ENCODE measurements at regions of chr11 and their contacts with region 1.

Region 1: GRCh38 chr11:107810875-107811274 is 47.7 kb downstream of the SLC35F2 start:
- DNase-seq: no peak
- H3K27ac ChIP-seq: no peak overlapping the region
- CTCF ChIP-seq: no peak

Region 2: GRCh38 chr11:107243929-107244328 is 566.9 kb before region 1 on chr11:
- CTCF ChIA-PET with region 1: no interaction called
- POLR2A ChIA-PET with region 1: no interaction called
- DNase-seq: no peak
- H3K27ac ChIP-seq: no peak overlapping the region
- CTCF ChIP-seq: no peak

Region 3: DNA sequence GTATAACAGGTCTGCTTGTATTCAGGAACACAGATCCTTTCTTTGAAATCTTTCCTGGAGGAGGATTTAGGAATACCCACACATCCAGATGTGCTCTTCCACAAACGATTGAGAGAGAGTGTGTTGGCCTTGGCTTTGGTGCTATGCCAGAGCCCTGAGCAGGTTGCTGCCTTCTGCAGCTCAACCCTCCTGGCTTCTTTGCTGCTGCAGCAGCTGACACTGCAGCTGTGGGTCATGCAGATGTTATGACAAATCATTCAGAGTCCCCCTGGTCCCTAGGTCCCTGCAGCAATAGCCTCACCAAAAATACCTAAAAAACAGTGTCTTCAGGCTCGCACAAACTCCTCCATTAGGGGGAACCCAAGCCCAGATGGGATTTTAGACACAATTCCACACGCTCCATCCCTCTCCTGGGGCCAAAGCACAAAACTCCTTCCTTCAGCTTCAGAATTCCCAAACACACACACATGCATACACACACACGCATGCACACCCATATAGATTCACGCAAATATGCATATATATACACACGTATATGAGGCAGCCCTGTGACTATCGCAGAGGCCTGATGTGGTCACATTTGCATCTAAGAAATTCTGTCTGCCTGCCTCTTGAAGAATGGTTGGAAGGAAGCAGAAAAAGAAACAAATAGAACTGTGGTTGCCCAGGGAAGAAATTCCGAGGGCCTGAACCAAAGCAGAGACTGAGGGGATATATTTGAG is 134.4 kb before region 1 on chr11:
- CTCF ChIA-PET with region 1: no interaction called
- POLR2A ChIA-PET with region 1: no interaction called
- DNase-seq: no peak
- H3K27ac ChIP-seq: no peak overlapping the region
- CTCF ChIP-seq: no peak

Region 4: GRCh38 chr11:107824668-107825369 is 13.9 kb after region 1 on chr11:
- CTCF ChIA-PET with region 1: interaction called, 3 read pairs
- POLR2A ChIA-PET with region 1: interaction called, 10 read pairs
- DNase-seq: no peak
- H3K27ac ChIP-seq: peak overlapping the region; percentile 9; the same call in 1 of the 2 replicates
- CTCF ChIP-seq: no peak

Region 5: GRCh38 chr11:107882095-107882820 is 71.4 kb after region 1 on chr11:
- CTCF ChIA-PET with region 1: no interaction called
- POLR2A ChIA-PET with region 1: no interaction called
- DNase-seq: no peak
- H3K27ac ChIP-seq: no peak overlapping the region
- CTCF ChIP-seq: no peak

Measured in RWPE1 (cell line).